WTC11 (cell line): ENCODE measurements at regions of chr4 and their contacts with region 1.

Region 1: GRCh38 chr4:183182873-183183725 is 84.0 kb downstream of the WWC2 start:
- DNase-seq: peak; percentile 76
- ATAC-seq: peak; percentile 92
- H3K4me3 Mint-ChIP-seq: peak overlapping the region; percentile 57
- H3K27ac Mint-ChIP-seq: peak overlapping the region; percentile 99
- H3K4me1 Mint-ChIP-seq: peaks cover 79% of the 10 kb centered on the region
- H3K27me3 Mint-ChIP-seq: no peaks in the 10 kb centered on the region
- CTCF ChIP-seq: no peak

Region 2: DNA sequence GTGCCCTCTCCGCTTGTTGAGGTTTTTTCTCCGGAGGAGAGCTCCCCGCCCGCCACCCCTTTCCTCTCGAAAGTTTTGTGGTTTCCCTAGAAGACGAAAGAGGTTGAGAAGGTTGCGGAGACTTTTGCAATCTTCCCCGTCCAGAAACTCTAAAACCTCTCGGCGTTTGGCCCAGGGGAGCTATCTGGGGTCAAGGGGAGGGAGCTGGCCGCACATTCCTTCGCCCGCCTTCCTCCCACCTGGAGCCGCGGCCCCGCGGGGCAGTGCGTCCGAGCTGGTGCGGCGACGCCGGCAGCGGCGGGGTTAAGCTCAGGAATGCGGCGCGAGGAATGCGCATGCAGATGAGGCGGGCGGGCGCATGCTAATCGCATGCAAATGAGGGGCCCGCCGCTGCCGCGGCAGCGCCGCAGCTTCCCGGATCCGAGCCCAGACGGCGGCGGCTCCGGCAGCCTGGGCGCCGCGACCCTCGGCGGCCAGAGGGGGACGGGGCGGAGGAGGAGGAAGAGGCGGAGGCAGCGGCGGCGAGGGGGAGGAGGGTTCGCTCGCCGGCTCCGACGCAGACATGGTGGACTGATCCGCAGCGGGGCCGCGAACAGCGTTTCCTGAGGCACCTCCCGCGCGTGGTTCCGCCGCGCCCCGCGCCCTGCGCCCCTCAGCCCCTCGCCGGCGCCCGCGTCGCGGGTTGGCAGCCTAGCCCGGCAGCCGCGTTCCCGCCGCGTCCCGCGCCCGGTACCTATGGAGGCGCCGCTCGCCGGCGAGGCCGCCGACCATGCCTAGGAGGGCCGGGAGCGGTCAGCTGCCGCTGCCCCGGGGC is 84.2 kb before region 1 on chr4 and contains the start of gene WWC2:
- CTCF ChIA-PET with region 1: interaction called, 5 read pairs
- POLR2A ChIA-PET with region 1: interaction called, 38 read pairs
- DNase-seq: peak; percentile 96
- ATAC-seq: peak; percentile 80
- H3K4me3 Mint-ChIP-seq: peak within 1 kb of the TSS; percentile 91
- H3K27ac Mint-ChIP-seq: peak within 1 kb of the TSS; percentile 68
- H3K4me1 Mint-ChIP-seq: peaks cover 47% of the 10 kb centered on the region
- H3K27me3 Mint-ChIP-seq: peaks cover 3% of the 10 kb centered on the region
- CTCF ChIP-seq: no peak
- total RNA-seq, gene WWC2: 126 to 133 TPM (median 133 TPM) in 3 replicates